ENCODE measurements at regions of chr22 and their contacts with region 1.

Region 1: DNA sequence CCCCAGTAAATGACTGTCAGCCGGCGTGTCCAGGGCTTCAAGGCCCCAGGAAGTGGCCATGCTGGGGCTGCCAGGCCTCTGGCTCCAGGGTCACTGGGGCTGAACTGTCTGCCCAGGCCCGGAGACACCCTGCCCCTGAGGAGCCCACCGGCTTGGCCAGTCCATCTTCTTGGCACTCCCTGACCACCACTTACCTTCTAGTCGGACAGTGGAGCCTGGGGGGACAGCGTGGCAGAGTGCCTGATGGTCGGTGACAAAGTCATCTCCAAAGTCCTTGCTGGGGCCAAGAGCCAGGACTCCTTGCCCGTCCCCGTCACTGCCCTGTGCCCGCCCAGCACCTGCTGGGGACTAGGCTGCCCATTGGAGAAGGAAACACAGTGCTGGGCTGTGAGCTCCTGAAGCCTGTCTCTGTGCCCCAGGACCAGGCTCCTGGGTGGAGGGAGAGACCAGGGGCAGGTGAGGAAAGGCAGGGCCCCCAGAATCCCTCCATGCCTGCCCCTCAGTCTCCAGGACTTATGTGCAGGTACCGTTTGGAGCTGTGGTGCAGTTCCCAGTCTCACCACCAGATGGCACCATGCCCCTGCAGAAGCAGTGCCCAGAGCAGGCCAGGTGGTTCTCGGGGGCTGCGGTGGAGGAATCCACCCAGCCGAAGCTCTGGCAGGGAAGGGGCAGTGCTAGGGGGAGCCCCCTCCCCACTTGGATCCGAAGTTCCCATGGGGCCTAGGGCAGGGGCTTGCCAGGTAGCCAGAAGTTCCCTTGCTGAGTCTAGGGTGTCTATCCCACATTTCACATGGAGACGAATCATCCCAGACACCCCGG is 6.0 kb upstream of the CCDC188 start:
- DNase-seq: peak; percentile 64 to 72 (median 66)
- H3K4me3 ChIP-seq: no peak overlapping the region
- H3K4me3 Mint-ChIP-seq: no peak overlapping the region
- H3K27ac ChIP-seq: no peak overlapping the region
- H3K27ac Mint-ChIP-seq: no peak overlapping the region
- H3K4me1 ChIP-seq: peaks cover 8 to 9% of the 10 kb centered on the region in 2 donors
- H3K4me1 Mint-ChIP-seq: peaks cover 10% of the 10 kb centered on the region
- H3K27me3 ChIP-seq: no peaks in the 10 kb centered on the region
- H3K27me3 Mint-ChIP-seq: peaks cover 7 to 29% (median 10%) of the 10 kb centered on the region in 3 donors
- CTCF ChIP-seq: peak; percentile 98

Region 2: DNA sequence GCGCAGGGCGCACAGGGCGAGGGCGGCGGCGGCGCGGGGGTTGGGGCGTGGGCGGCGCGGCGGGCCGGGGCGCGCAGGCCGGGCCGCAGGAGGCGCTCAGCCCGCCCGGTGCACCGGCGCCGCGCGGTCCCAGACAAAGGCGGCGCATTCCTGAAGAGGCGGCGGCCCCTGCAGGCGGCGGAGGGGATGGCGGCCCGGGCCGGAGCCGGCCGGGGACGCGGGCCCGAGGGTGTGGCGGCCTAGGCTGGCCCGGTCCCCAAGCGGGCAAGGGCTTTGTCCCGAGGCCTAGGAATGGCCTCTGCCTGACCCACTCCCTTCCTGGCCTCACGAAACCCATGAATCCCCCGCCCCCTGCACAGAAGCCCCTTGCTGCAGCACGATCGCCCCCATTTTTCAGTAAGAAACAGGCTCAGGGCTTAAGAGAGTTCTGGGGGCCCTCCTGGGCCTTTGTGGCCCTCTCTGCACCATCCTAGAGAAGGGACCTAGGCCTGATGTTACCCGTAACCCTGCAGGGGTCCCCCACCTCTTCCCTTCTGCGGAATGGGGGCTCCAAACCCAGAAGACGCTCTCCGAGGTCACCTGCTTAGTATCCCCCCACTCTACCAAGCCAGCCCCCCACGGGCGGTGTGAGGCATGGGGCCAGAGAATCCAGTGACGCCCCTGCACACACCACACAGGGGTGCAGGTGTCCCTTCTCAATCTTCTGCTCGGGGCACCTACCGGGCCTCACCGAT is 111.6 kb after region 1 on chr22 and contains the start of gene RTN4R:
- intact Hi-C with region 1: loop called (anchors 5 kb)
- DNase-seq: peak; percentile 13 to 48 (median 43)
- H3K4me3 ChIP-seq: peak within 1 kb of the TSS in 1 of 3 experiments; percentile 40
- H3K4me3 Mint-ChIP-seq: peak within 1 kb of the TSS; percentile 39 to 53
- H3K27ac ChIP-seq: no peak within 1 kb of the TSS
- H3K27ac Mint-ChIP-seq: no peak within 1 kb of the TSS
- H3K4me1 ChIP-seq: peaks cover 4 to 8% of the 10 kb centered on the region in 2 donors
- H3K4me1 Mint-ChIP-seq: peaks cover 5% of the 10 kb centered on the region
- H3K27me3 ChIP-seq: peaks cover 0 to 11% of the 10 kb centered on the region in 2 donors
- H3K27me3 Mint-ChIP-seq: peaks cover 5 to 23% (median 7%) of the 10 kb centered on the region in 3 donors
- CTCF ChIP-seq: peak; percentile 40
- polyA plus RNA-seq, gene RTN4R: not detected